Colonic mucosa (tissue), 4 donors: ENCODE measurements at regions of chr2 and their contacts with region 1.

Region 1: DNA sequence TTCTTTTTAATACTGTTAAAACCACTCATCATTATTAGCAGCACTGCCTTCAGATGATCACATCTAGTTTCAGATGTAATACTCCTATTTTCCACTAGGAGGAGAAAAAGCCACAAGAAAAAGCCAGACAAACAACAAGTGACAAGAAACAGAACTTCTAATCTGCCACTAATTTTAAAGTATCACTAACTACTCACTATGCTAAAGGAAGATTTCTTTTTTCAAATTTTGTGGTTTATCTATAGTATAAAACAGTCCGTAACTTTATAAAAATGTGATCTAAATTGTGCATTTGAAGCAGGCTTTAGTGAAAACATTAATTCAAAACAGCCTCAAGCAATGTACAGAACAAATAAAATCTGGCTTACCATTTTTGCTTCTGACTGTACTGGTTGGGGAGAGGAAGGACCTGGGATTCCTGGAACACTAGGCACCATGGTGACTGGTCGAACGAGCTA is 56.8 kb downstream of the ATF2 start:
- DNase-seq: no peak
- H3K4me3 ChIP-seq: no peak overlapping the region
- H3K27ac ChIP-seq: no peak overlapping the region
- H3K4me1 ChIP-seq: no peaks in the 10 kb centered on the region
- H3K27me3 ChIP-seq: no peaks in the 10 kb centered on the region
- CTCF ChIP-seq: peak; percentile 78

Region 2: DNA sequence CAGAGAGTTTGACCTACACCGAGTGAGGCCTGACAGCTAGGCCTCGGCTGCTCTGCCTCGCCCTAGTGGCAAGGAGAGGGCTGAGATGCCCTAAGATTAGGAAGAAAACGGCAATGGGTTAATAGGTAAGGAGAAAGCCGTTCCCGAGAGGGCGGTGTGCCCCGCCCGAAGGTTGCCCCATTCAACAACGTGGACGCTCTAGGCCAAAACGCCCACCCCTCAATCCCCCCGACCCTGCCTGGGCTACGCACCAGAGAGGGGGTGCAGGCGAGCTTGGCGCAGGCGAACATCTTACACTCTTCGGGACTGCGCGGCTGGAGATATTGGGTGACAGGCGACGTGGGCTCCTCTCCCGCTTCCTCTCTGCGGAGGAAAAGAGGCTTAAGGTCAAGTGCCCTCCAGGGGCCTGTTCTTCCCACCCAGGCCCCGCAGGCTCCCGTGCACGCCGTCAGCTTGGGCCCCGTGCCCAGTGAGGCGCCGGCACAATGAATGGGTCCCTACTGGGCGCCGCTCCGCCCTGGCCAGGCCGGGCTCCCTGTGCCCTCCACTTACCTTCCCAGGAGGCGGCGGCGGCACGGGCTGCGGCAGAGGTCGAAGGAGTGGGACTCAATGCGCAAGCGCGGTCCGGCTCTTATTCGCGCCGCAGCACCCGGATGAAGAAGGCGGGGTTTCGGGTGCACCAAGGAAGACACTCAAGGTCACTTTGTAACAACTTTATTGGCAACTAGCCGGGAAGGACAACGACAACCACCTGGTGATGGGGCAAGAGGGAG is 70.1 kb after region 1 on chr2 and contains the start of gene ATP5MC3:
- intact Hi-C with region 1: loop called (anchors 10 kb)
- DNase-seq: peak; percentile 96
- H3K4me3 ChIP-seq: peak within 1 kb of the TSS; percentile 81
- H3K27ac ChIP-seq: peak within 1 kb of the TSS; percentile 94
- H3K4me1 ChIP-seq: no peaks in the 10 kb centered on the region
- H3K27me3 ChIP-seq: no peaks in the 10 kb centered on the region
- CTCF ChIP-seq: no peak
- total RNA-seq, gene ATP5MC3: 610 to 690 TPM

Region 3: GRCh38 chr2:175282290-175282689 is 171.1 kb after region 1 on chr2:
- intact Hi-C with region 1: loop called (anchors 5 kb)
- DNase-seq: no peak
- H3K4me3 ChIP-seq: no peak overlapping the region
- H3K27ac ChIP-seq: no peak overlapping the region
- H3K4me1 ChIP-seq: no peaks in the 10 kb centered on the region
- H3K27me3 ChIP-seq: no peaks in the 10 kb centered on the region
- CTCF ChIP-seq: peak; percentile 39